H1 (cell line): ENCODE measurements at regions of chr6 and their contacts with region 1.

Region 1: DNA sequence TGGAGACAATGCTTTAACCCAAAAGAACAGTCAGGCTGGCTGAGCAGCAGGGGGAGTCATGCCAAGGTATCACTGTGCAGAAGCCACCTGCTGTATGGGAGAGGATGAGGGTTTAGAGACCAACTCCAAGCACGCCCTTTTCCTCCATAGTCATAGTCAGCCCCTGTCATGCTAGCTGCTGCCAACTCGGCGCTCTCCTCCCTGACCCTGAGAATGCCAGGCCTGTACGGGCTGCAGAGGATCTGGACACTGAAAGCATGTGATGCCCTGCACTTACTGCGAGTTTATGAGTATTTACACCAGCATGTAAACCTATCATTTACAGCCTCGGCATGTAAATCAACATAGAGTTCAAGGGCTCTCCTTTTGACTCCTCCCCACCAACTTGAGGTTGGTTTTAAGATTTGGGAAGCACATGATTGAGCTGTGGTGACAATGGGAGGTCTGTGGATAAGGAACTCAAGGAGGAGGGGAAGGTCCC is 11.7 kb upstream of the SCUBE3 start:
- DNase-seq: no peak
- H3K4me3 ChIP-seq: no peak overlapping the region
- H3K27ac ChIP-seq: no peak overlapping the region
- H3K4me1 ChIP-seq: peaks cover 0 to 7% (median 5%) of the 10 kb centered on the region in 4 experiments; a peak in 4 of 7 replicates
- H3K27me3 ChIP-seq: peaks cover 3 to 11% (median 6%) of the 10 kb centered on the region in 4 experiments; a peak in 5 of 7 replicates
- CTCF ChIP-seq: peak in 1 of 3 experiments; percentile 36; a peak in 1 of 4 replicates
- EP300 ChIP-seq: no peak
- POLR2A ChIP-seq: no peak
- RAD21 ChIP-seq: peak in 1 of 2 experiments; percentile 24; a peak in 1 of 4 replicates

Region 2: GRCh38 chr6:35146453-35146852 is 55.7 kb before region 1 on chr6:
- CTCF ChIA-PET with region 1: interaction called, 114 read pairs
- POLR2A ChIA-PET with region 1: interaction called, 3 read pairs
- DNase-seq: peak in 1 of 2 experiments; percentile 54
- H3K4me3 ChIP-seq: no peak overlapping the region
- H3K27ac ChIP-seq: no peak overlapping the region
- H3K4me1 ChIP-seq: peaks cover 0 to 10% (median 7%) of the 10 kb centered on the region in 4 experiments; a peak in 5 of 7 replicates
- H3K27me3 ChIP-seq: peaks cover 0 to 19% (median 13%) of the 10 kb centered on the region in 4 experiments; a peak in 6 of 7 replicates
- CTCF ChIP-seq: peak; percentile 55 to 63 (median 61)
- EP300 ChIP-seq: no peak
- POLR2A ChIP-seq: no peak
- RAD21 ChIP-seq: peak; percentile 73 to 85

Region 3: DNA sequence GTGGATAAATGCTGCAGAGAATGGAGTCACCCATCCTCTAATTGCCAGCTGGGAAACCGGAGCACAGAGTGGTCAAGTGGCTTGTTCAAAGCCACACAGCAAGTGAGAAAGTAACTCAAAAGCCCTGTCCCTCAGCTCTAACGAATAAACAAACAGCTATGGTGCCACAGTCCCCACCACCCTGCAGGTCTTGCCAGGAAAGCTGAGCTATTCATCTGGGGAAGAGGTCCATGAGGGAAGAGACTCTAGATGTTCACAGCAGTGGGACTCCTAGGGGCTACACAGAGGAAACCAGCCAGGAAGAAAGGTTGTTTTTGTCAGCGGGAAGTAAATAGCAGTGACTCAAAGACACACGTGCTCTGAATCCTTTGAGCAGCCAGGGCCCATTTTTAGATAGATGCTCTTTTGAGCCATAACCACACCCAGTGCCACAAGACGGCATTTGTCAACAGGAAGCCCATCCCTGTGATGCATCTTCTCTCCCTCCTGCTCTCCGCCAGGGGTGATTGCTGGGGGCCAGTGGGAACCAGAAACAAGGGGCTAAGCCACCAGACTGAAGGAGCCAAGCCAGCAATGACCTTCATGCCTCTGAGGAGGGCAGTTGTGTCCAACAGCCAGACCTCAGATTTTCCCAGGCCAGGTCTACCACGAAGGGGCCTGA is 28.5 kb before region 1 on chr6:
- CTCF ChIA-PET with region 1: interaction called, 34 read pairs
- POLR2A ChIA-PET with region 1: no interaction called
- DNase-seq: no peak
- H3K4me3 ChIP-seq: no peak overlapping the region
- H3K27ac ChIP-seq: no peak overlapping the region
- H3K4me1 ChIP-seq: no peaks in the 10 kb centered on the region; a peak in 2 of 7 replicates
- H3K27me3 ChIP-seq: peaks cover 0 to 2% (median 0%) of the 10 kb centered on the region in 4 experiments; a peak in 2 of 7 replicates
- CTCF ChIP-seq: no peak
- EP300 ChIP-seq: no peak
- POLR2A ChIP-seq: no peak
- RAD21 ChIP-seq: no peak

Region 4: GRCh38 chr6:35188841-35189240 is 13.3 kb before region 1 on chr6:
- CTCF ChIA-PET with region 1: interaction called, 219 read pairs
- POLR2A ChIA-PET with region 1: no interaction called
- DNase-seq: no peak
- H3K4me3 ChIP-seq: no peak overlapping the region
- H3K27ac ChIP-seq: no peak overlapping the region
- H3K4me1 ChIP-seq: peaks cover 0 to 10% (median 2%) of the 10 kb centered on the region in 4 experiments; a peak in 3 of 7 replicates
- H3K27me3 ChIP-seq: no peaks in the 10 kb centered on the region; a peak in 2 of 7 replicates
- CTCF ChIP-seq: no peak
- EP300 ChIP-seq: no peak
- POLR2A ChIP-seq: no peak
- RAD21 ChIP-seq: no peak

Region 5: DNA sequence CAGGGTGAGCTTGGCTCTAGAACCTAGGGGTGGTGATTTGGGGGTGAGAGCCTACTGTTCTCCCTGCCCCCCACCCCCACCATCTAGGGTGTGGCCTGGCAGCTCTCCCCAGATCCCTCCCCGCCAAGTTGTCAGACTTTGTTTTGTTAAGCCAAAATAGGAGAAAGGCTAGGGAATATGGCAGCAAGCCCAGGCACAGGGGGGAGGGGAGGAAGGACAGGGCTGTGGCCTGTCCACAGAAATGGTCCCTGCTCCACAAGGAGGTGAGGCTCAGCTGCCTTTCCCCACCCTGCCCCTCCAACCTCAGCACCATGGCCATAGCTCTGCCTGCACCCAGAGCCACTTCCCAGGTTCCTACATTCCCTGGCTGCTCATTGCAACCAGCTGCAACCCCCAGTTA is 28.8 kb after region 1 on chr6:
- CTCF ChIA-PET with region 1: interaction called, 18 read pairs
- POLR2A ChIA-PET with region 1: no interaction called
- DNase-seq: no peak
- H3K4me3 ChIP-seq: no peak overlapping the region
- H3K27ac ChIP-seq: no peak overlapping the region
- H3K4me1 ChIP-seq: peaks cover 0 to 2% (median under 1%) of the 10 kb centered on the region in 4 experiments; a peak in 3 of 7 replicates
- H3K27me3 ChIP-seq: peaks cover 0 to 6% (median 3%) of the 10 kb centered on the region in 4 experiments; a peak in 4 of 7 replicates
- CTCF ChIP-seq: no peak
- EP300 ChIP-seq: no peak
- POLR2A ChIP-seq: no peak
- RAD21 ChIP-seq: no peak

Region 6: GRCh38 chr6:35427851-35428321 is 225.8 kb after region 1 on chr6:
- CTCF ChIA-PET with region 1: no interaction called
- POLR2A ChIA-PET with region 1: no interaction called
- DNase-seq: no peak
- H3K4me3 ChIP-seq: no peak overlapping the region
- H3K27ac ChIP-seq: 0 out of 2 replicates have a peak overlapping the region, but pooled peaks have one; percentile 52
- H3K4me1 ChIP-seq: peaks cover 6 to 28% (median 16%) of the 10 kb centered on the region in 4 experiments
- H3K27me3 ChIP-seq: no peaks in the 10 kb centered on the region
- CTCF ChIP-seq: no peak
- EP300 ChIP-seq: no peak
- POLR2A ChIP-seq: no peak
- RAD21 ChIP-seq: no peak